Naive thymus-derived CD4-positive, alpha-beta T cell (primary cell): ENCODE measurements at regions of chr17 and their contacts with region 1.

Region 1: DNA sequence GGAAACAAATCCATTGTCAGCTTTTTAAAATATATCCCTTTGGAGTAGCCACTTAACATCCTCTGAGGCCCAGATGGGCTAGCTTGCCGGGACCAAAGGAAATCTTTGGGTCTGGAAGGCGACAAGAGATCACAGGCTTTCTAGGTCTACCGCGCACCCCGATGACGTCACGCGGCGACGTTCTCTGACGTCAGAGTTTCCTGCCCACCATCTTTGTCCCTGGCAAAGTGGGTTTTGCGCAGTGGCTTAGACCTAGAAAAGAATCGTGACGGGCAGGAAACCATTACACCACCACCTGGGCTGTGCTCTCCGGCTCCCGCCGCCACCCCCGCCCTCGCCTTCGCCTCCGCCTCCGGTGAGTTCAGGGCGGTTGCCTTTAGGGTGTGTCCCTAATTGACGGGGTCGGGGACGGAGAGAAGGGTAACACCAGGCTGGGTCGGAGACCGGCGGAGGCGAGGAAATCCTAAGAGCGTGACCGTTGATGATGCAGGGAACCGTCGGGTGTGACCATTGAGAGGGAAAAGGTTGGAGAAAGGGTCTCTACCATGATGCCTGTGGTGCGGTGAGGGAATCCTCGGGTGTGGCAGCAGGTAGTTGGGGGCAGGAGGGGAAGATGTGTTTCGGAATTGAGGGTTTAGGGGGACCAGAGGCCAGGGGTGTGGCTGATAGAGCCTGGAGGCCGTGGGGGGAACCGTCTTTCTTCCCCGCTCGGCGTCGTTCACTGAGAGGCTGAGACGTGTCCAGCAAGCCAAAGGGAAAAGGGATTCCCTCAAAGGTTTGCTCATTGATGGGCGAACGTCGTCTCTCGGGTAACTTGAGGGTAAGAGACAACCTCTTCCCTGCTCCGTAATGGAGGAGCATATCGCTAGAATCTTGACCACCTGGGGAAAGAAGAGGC is at the start of gene AP2B1:
- DNase-seq: peak; percentile 96 to 100 (median 98)
- ATAC-seq: peak; percentile 99
- H3K4me3 ChIP-seq: peak within 1 kb of the TSS; percentile 85
- H3K4me3 Mint-ChIP-seq: peak within 1 kb of the TSS; percentile 92 to 99 (median 97)
- H3K27ac ChIP-seq: peak within 1 kb of the TSS; percentile 91
- H3K27ac Mint-ChIP-seq: peak within 1 kb of the TSS; percentile 95 to 99 (median 99)
- H3K4me1 ChIP-seq: peaks cover 13 to 17% of the 10 kb centered on the region in 2 donors
- H3K4me1 Mint-ChIP-seq: peaks cover 28 to 45% (median 38%) of the 10 kb centered on the region in 7 donors
- H3K27me3 ChIP-seq: no peaks in the 10 kb centered on the region
- H3K27me3 Mint-ChIP-seq: peaks cover 0 to 12% (median 0%) of the 10 kb centered on the region in 5 donors
- total RNA-seq, gene AP2B1: 84.7 to 197 (median 136) TPM

Region 2: GRCh38 chr17:34961093-34961911 is 626.0 kb before region 1 on chr17 and contains the starts of genes CCT6B and ZNF830:
- CTCF ChIA-PET with region 1: no interaction called
- POLR2A ChIA-PET with region 1: no interaction called
- intact Hi-C with region 1: loop called (anchors 1 to 2 kb)
- DNase-seq: peak; percentile 69 to 94 (median 91)
- ATAC-seq: peak; percentile 95
- H3K4me3 ChIP-seq: peak within 1 kb of the TSS; percentile 94
- H3K4me3 Mint-ChIP-seq: peak within 1 kb of the TSS; percentile 97 to 100 (median 99)
- H3K27ac ChIP-seq: peak within 1 kb of the TSS; percentile 92
- H3K27ac Mint-ChIP-seq: peak within 1 kb of the TSS; percentile 98 to 100 (median 99)
- H3K4me1 ChIP-seq: peaks cover 14 to 16% of the 10 kb centered on the region in 2 donors
- H3K4me1 Mint-ChIP-seq: peaks cover 19 to 38% (median 33%) of the 10 kb centered on the region in 7 donors
- H3K27me3 ChIP-seq: no peaks in the 10 kb centered on the region
- H3K27me3 Mint-ChIP-seq: peaks cover 0 to 10% (median 5%) of the 10 kb centered on the region in 5 donors
- total RNA-seq, gene CCT6B: 1.6 to 3.8 (median 2.4) TPM
- total RNA-seq, gene ZNF830: 26.9 to 47.3 (median 44.9) TPM

Region 3: GRCh38 chr17:35161281-35161761 is 426.0 kb before region 1 on chr17:
- CTCF ChIA-PET with region 1: no interaction called
- POLR2A ChIA-PET with region 1: interaction called, 4 read pairs
- intact Hi-C with region 1: loop called in 1 of 2 experiments (anchors 5 kb)
- DNase-seq: peak in 7 of 9 donors; percentile 31 to 68 (median 55)
- ATAC-seq: peak; percentile 77
- H3K4me3 ChIP-seq: peak overlapping the region; percentile 30
- H3K4me3 Mint-ChIP-seq: peak overlapping the region; percentile 41 to 83 (median 72)
- H3K27ac ChIP-seq: peak overlapping the region; percentile 75
- H3K27ac Mint-ChIP-seq: peak overlapping the region; percentile 65 to 96 (median 90)
- H3K4me1 ChIP-seq: peaks cover 40 to 52% of the 10 kb centered on the region in 2 donors
- H3K4me1 Mint-ChIP-seq: peaks cover 34 to 76% (median 70%) of the 10 kb centered on the region in 7 donors
- H3K27me3 ChIP-seq: no peaks in the 10 kb centered on the region
- H3K27me3 Mint-ChIP-seq: peaks cover 0 to 11% (median 0%) of the 10 kb centered on the region in 5 donors

Region 4: DNA sequence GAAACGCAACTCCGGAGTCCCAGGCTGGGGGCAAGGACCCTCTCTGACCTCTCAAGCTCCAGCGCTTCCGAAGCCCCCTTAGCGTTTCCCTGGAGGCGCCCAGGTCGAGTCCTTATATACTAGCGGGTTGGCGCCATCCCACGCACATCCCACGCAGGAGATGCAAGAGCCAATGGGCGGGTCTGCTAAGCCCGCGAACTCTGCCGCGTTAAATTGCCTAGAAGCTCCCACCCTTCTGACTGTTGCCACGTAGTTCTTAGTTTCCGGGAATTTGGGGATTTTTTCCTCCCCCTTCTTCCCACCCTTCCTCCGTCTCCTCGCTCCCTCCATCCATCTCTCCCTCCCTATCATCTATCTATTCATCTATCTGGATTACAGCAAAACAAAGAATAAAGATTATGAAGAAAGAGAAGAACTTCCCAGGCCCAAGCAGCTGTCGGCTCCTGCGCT is 213.8 kb before region 1 on chr17 and contains the start of gene SLFN11:
- CTCF ChIA-PET with region 1: no interaction called
- POLR2A ChIA-PET with region 1: no interaction called
- intact Hi-C with region 1: loop called in 1 of 2 experiments (anchors 5 kb)
- DNase-seq: peak; percentile 49 to 94 (median 80)
- ATAC-seq: peak; percentile 92
- H3K4me3 ChIP-seq: peak within 1 kb of the TSS; percentile 92
- H3K4me3 Mint-ChIP-seq: peak within 1 kb of the TSS; percentile 94 to 99 (median 98)
- H3K27ac ChIP-seq: peak within 1 kb of the TSS; percentile 99
- H3K27ac Mint-ChIP-seq: peak within 1 kb of the TSS; percentile 92 to 99 (median 99)
- H3K4me1 ChIP-seq: peaks cover 2 to 13% of the 10 kb centered on the region in 2 donors
- H3K4me1 Mint-ChIP-seq: peaks cover 23 to 74% (median 54%) of the 10 kb centered on the region in 7 donors
- H3K27me3 ChIP-seq: no peaks in the 10 kb centered on the region
- H3K27me3 Mint-ChIP-seq: peaks cover 0 to 8% (median 0%) of the 10 kb centered on the region in 5 donors
- total RNA-seq, gene SLFN11: 13.8 to 71.9 (median 29.7) TPM

Region 5: DNA sequence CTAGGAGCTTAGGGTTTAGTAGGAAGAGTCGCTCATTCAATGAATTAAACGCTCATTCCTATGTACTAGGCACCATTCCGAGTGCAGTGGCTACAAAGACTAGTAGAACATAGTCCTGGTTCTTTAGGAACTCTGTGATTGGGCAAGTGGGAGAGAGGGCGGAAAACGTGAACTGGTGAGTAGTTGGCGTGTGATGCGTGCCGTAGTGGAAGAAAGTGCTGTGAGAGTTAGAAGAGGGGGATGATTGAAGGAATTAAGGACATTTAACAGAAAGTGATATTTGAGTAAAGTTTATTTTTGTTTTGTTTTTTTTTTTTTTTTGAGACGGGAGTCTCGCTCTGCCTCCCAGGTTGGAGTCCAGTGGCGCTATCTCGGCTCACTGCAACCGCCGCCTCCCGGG is 18.8 kb before region 1 on chr17:
- CTCF ChIA-PET with region 1: no interaction called
- POLR2A ChIA-PET with region 1: interaction called, 10 read pairs
- intact Hi-C with region 1: loop called (anchors 1 kb)
- DNase-seq: peak in 3 of 9 donors; percentile 17 to 52 (median 34)
- ATAC-seq: peak; percentile 35
- H3K4me3 ChIP-seq: peak overlapping the region; percentile 71
- H3K4me3 Mint-ChIP-seq: peak overlapping the region; percentile 83 to 98 (median 91)
- H3K27ac ChIP-seq: peak overlapping the region; percentile 86
- H3K27ac Mint-ChIP-seq: peak overlapping the region; percentile 64 to 97 (median 93)
- H3K4me1 ChIP-seq: peaks cover 14 to 20% of the 10 kb centered on the region in 2 donors
- H3K4me1 Mint-ChIP-seq: peaks cover 18 to 49% (median 29%) of the 10 kb centered on the region in 7 donors
- H3K27me3 ChIP-seq: no peaks in the 10 kb centered on the region
- H3K27me3 Mint-ChIP-seq: peaks cover 0 to 21% (median 0%) of the 10 kb centered on the region in 5 donors

Region 6: DNA sequence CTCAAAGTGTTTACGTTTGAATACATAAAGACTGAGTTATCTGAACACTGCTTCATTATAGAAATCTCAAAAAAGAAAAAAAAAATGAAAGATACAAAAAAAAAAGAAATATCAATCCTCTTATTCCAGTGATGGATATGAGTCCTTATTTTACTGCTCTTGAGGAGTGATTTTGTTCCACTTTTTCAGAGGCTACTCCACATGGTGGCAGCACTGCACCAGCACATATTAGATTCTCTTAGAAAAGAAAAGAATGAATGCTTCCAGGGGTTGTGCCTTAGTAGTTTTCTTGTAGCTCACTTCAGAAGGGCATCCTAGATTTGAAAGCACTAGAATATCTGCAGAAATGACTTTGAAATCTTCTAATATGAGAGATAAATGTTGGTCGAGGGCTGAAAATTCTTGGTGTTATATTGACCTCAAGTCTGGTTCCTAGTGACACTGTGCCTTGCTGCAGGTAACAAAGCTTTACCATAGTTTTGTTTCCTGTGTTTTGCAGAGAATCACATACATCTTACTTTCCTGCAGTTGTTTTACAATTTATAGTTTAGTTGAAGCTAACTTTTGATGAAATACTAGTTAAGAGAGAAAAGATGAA is 25.7 kb after region 1 on chr17:
- CTCF ChIA-PET with region 1: interaction called, 6 read pairs
- POLR2A ChIA-PET with region 1: interaction called, 10 read pairs
- intact Hi-C with region 1: no loop called
- DNase-seq: peak in 6 of 9 donors; percentile 21 to 50 (median 31)
- ATAC-seq: peak; percentile 67
- H3K4me3 ChIP-seq: no peak overlapping the region
- H3K4me3 Mint-ChIP-seq: no peak overlapping the region
- H3K27ac ChIP-seq: no peak overlapping the region
- H3K27ac Mint-ChIP-seq: no peak overlapping the region
- H3K4me1 ChIP-seq: no peaks in the 10 kb centered on the region
- H3K4me1 Mint-ChIP-seq: peaks cover 0 to 9% (median 5%) of the 10 kb centered on the region in 7 donors
- H3K27me3 ChIP-seq: no peaks in the 10 kb centered on the region
- H3K27me3 Mint-ChIP-seq: no peaks in the 10 kb centered on the region

Region 7: DNA sequence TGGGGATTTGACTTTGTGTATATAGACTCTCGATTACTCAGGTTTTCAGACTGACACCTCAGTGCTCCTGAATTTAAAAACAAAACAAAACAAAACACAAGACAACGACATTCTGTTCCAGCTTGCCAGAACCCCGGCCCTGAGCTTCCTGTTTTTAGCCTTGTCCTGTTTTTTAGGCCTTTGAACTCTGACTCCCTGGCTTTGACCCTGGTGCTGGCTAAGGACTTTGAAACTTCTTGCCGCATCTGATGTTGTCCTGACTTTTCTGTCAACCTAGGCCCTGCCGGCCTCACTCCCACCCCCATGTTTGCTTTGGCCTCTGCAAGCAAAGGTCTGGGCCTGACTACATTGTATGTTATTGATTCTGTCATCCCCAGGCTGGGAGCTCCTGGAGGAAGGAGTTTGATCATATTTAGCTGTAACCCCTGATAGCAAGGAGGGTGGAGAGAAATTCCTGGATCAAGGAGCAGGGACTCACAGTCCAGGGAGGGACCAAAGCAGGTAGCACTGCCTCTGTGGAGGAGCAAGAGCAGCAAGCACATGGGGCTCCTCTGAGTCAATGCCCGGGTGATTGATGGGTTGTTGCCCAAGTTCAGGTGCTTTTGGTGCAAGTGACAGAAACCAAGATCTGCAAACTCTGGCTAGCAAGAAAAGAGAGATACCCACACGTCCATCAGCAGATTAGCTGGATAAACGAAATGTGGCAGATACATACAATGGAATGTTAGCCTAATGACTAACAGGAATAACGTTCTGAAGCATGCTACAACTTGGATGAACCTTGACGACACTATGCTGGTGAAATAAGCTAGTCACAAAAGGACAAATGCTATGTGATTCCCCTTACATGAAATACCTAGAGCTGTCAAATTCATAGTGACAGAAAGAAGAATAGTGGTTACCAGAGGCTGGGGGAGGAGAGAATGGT is 386.3 kb after region 1 on chr17:
- CTCF ChIA-PET with region 1: no interaction called
- POLR2A ChIA-PET with region 1: no interaction called
- intact Hi-C with region 1: no loop called
- DNase-seq: no peak
- ATAC-seq: no peak
- H3K4me3 ChIP-seq: no peak overlapping the region
- H3K4me3 Mint-ChIP-seq: no peak overlapping the region
- H3K27ac ChIP-seq: no peak overlapping the region
- H3K27ac Mint-ChIP-seq: no peak overlapping the region
- H3K4me1 ChIP-seq: no peaks in the 10 kb centered on the region
- H3K4me1 Mint-ChIP-seq: peaks cover 0 to 9% (median 0%) of the 10 kb centered on the region in 7 donors
- H3K27me3 ChIP-seq: no peaks in the 10 kb centered on the region
- H3K27me3 Mint-ChIP-seq: peaks cover 0 to 11% (median 7%) of the 10 kb centered on the region in 5 donors

Region 8: GRCh38 chr17:36948717-36949460 is 1361.6 kb after region 1 on chr17 and contains the start of gene AATF:
- CTCF ChIA-PET with region 1: no interaction called
- POLR2A ChIA-PET with region 1: no interaction called
- intact Hi-C with region 1: loop called in 1 of 2 experiments (anchors 10 kb)
- DNase-seq: peak; percentile 93 to 99 (median 97)
- ATAC-seq: peak; percentile 99
- H3K4me3 ChIP-seq: peak within 1 kb of the TSS; percentile 69
- H3K4me3 Mint-ChIP-seq: peak within 1 kb of the TSS; percentile 91 to 99 (median 95)
- H3K27ac ChIP-seq: peak within 1 kb of the TSS; percentile 85
- H3K27ac Mint-ChIP-seq: peak within 1 kb of the TSS; percentile 91 to 97 (median 94)
- H3K4me1 ChIP-seq: peaks cover 21 to 33% of the 10 kb centered on the region in 2 donors
- H3K4me1 Mint-ChIP-seq: peaks cover 43 to 60% (median 51%) of the 10 kb centered on the region in 7 donors
- H3K27me3 ChIP-seq: peaks cover 7 to 18% of the 10 kb centered on the region in 2 donors
- H3K27me3 Mint-ChIP-seq: peaks cover 26 to 45% (median 34%) of the 10 kb centered on the region in 5 donors
- total RNA-seq, gene AATF: 39.7 to 70.8 (median 58.7) TPM